Esophagus muscularis mucosa (tissue), 4 donors: ENCODE measurements at regions of chr4 and their contacts with region 1.

Region 1: DNA sequence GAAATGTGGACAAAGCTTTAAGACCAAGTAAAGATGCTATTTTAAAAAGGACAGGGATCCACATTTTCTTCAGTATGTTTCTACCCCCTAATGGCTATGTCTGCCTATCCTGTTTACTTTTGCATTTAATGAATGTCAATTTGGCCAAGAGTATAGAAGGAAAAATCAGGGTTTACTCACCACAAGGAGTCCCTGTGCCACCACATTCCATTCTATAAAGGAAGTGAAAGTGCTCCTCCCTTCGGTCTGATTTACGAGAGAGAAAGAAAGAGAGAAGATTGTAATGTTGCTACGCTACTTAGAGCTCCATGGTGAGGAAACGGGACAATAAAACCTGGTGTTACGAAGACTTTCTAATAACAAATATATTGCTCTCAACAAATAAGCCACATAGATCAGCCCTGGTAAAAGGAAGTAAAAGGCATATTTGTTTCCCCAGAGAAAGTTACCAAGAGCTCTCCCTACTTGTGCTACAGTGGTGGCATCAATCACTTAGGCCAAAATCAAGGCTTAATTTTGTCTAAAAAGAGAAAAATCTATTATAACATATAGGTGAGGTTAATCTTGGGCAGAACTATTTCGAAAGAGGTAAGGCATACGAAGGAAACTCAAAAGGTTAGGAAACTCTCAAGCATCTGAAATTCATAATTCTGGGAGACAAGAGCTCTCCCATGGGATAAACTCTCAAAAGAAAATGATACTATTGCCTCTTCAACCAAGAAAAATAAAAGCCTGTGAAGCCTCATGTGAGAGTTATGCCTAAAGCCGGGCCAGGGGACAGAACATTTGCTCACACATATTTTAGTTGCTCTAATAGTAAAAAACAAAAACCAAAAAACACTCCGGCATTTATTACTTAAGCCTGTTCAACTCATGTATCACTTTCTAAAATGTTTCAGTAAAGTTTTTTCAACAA is 29.5 kb downstream of the TAPT1 start:
- DNase-seq: no peak
- H3K4me3 ChIP-seq: peak overlapping the region; percentile 34 to 45 (median 42)
- H3K27ac ChIP-seq: peak overlapping the region; percentile 67 to 76 (median 70)
- H3K4me1 ChIP-seq: peaks cover 41 to 65% (median 57%) of the 10 kb centered on the region in 4 donors
- H3K27me3 ChIP-seq: no peaks in the 10 kb centered on the region
- CTCF ChIP-seq: peak; percentile 47 to 56 (median 50)
- EP300 ChIP-seq: no peak
- POLR2A ChIP-seq: no peak

Region 2: DNA sequence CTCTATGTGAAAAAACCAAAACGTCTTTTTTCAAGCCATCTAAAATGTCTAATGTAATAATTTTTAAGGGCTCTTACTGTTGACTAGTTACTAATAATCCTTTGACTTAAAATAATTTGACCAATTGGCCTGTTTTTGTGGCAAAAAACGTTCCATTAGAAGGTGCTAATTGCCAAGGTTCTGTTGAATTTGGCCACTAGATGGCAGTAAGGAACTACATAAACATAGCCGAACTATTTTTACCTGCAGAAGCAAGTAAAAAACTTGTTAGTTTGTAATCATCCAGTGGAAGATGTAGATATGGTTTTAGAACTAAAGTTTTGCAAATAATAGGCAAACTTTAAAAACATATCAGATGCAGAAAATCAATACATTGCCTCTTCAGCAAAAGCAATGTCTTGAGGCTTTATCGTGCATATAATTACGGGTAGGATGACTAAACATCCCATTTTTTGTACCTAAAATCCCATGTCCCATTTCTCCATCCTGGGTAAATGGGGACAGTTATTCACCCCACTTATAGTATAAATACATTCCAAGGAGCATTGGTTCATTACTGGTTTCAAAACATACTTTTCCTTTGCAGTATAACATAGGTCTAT is 170.5 kb before region 1 on chr4:
- intact Hi-C with region 1: loop called (anchors 5 kb)
- DNase-seq: no peak
- H3K4me3 ChIP-seq: no peak overlapping the region
- H3K27ac ChIP-seq: no peak overlapping the region
- H3K4me1 ChIP-seq: peaks cover 0 to 15% (median 8%) of the 10 kb centered on the region in 4 donors
- H3K27me3 ChIP-seq: peaks cover 0 to 4% (median 0%) of the 10 kb centered on the region in 4 donors
- CTCF ChIP-seq: peak; percentile 74 to 85 (median 77)
- EP300 ChIP-seq: no peak
- POLR2A ChIP-seq: no peak

Region 3: DNA sequence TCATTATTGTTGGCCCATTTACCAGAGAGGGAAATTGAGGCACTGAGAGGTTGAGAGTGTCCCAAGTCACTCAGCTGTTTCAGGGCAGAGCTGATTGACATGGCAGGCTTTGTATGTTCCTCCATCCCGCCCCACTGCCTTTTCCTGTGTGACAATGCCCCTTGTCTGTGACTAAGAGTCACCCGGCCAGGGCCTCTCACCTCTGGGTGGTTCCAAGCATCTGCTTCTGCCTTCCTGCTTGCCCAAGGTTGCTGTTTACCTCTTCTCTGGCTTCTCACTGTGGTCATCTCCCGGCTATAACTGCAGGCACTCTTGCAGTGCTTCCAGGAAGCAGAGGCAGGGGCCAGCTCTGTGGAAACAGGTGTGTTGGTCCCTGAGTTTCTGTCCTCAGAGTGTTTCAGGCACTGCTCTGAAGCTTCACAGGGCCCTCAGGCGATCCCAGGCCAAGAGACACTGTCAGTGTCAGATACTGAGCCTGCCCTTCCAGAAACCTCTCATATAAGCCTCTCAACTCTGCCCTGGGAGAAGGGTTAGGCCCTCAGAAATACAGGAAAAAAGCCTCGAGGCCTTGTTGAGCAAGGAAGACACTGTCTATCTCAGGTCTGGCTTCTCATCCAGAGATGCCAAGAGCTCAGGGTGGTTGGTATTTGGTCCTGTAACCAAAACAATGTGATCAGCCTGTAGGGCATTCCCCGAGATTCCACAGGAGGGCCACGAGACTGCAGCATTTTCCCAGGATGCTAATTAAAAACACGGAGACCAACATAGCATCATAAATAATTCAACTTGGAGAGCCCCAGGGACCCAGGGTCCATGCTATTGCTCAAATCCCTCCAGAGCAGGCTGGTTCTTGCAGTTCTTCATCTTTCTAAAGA is 70.9 kb before region 1 on chr4:
- intact Hi-C with region 1: no loop called
- DNase-seq: no peak
- H3K4me3 ChIP-seq: no peak overlapping the region
- H3K27ac ChIP-seq: no peak overlapping the region
- H3K4me1 ChIP-seq: peaks cover 0 to 9% (median 0%) of the 10 kb centered on the region in 4 donors
- H3K27me3 ChIP-seq: no peaks in the 10 kb centered on the region
- CTCF ChIP-seq: no peak
- EP300 ChIP-seq: no peak
- POLR2A ChIP-seq: no peak

Region 4: GRCh38 chr4:16253127-16253960 is 56.6 kb after region 1 on chr4:
- intact Hi-C with region 1: no loop called
- DNase-seq: no peak
- H3K4me3 ChIP-seq: no peak overlapping the region
- H3K27ac ChIP-seq: no peak overlapping the region
- H3K4me1 ChIP-seq: peaks cover 0 to 7% (median 0%) of the 10 kb centered on the region in 4 donors
- H3K27me3 ChIP-seq: no peaks in the 10 kb centered on the region
- CTCF ChIP-seq: no peak
- EP300 ChIP-seq: no peak
- POLR2A ChIP-seq: no peak